CD8-positive, alpha-beta T cell (primary cell): ENCODE measurements at regions of chr17 and their contacts with region 1.

Region 1: DNA sequence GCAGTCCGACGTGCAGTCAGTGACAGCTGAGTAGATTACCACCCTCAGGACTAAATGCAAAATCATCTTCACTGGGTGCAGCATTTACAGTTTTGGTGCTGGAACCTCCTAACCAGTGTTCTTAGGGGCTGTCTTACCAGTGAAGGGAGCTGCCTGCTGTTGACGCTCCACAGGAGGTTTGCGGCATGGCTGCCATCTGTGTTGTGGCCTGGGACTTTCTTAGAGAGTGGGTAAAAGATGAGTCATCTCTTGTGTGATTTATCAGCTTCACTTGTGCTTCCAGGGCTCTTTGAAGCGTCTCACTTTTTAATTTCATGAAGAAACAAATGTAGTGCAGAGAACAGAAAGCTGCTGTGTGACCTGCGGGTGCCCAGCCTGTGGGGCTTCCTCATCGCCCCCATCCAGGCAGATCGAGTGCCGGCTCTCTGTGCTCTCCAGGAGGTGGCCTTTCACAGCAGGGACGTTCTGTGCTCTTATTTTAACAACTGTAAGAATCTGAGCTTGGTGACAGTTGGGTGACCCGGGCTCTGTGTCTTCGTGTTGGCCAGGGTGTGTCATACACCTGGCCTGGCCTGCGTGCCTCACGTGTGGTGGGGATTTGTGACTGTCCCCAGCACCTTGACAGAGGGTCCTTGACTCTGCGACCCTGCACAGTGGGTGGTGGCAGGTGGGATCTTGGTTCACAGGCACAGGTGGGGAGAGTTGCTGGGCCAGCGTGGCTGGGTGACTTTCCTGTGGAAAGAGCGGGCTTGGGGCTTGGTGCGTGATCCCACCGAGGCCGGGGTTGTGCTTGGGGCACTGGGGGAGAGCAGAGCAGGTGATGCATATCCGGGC is 24.3 kb upstream of the ZNF750 start:
- DNase-seq: peak; percentile 75 to 97 (median 88)
- ATAC-seq: peak; percentile 85
- H3K4me3 ChIP-seq: peak overlapping the region; percentile 23 to 46
- H3K4me3 Mint-ChIP-seq: peak overlapping the region; percentile 63
- H3K27ac ChIP-seq: peak overlapping the region; percentile 54 to 84
- H3K27ac Mint-ChIP-seq: peak overlapping the region; percentile 98
- H3K4me1 ChIP-seq: peaks cover 65% of the 10 kb centered on the region
- H3K4me1 Mint-ChIP-seq: peaks cover 65% of the 10 kb centered on the region
- H3K27me3 ChIP-seq: no peaks in the 10 kb centered on the region
- H3K27me3 Mint-ChIP-seq: no peaks in the 10 kb centered on the region
- CTCF ChIP-seq: no peak

Region 2: DNA sequence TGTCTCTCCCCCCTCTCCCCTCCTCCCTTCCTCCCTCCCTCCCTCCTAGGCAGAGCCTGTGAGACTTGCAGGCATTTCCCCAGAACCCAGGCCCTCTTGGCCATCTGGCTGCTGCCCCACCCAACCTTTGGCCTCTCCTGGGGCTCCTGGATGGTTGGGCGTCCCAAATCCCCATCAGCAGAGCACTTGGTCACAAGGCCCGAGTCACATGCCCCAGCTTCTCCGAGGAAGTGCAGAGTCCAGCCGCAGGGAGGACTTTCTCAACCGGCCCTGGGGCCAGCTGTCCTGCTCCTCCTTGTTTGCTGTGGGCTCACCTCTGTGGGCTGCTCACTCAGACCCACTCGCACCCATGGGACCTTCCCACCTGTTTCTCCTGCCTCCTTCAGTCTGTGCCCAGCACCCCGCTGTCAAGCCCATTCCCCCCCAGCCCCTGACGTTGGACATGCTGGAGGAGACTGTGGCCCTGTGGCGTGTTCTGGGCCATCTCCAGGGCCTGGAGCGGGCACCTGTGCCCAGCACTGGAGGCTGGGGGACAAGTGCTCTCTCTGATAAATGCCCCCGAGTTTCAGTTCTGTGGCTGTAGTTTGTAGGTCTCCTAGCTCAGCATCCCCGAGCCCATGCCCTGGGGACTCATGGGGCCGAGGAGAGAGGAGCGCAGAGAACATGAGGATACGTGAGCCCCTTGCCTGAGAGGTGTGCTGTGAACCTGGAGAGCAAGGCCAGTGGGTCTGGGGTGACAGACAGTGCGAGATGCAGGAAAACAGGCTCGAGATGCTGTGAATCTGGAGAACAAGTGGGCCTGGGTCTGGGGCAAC is 17.9 kb after region 1 on chr17:
- CTCF ChIA-PET with region 1: interaction called, 11 read pairs
- POLR2A ChIA-PET with region 1: interaction called, 59 read pairs
- intact Hi-C with region 1: loop called (anchors 1 kb)
- DNase-seq: no peak
- ATAC-seq: no peak
- H3K4me3 ChIP-seq: peak overlapping the region; percentile 14 to 70
- H3K4me3 Mint-ChIP-seq: peak overlapping the region; percentile 82
- H3K27ac ChIP-seq: peak overlapping the region; percentile 74
- H3K27ac Mint-ChIP-seq: peak overlapping the region; percentile 99
- H3K4me1 ChIP-seq: peaks cover 63% of the 10 kb centered on the region
- H3K4me1 Mint-ChIP-seq: peaks cover 71% of the 10 kb centered on the region
- H3K27me3 ChIP-seq: no peaks in the 10 kb centered on the region
- H3K27me3 Mint-ChIP-seq: no peaks in the 10 kb centered on the region
- CTCF ChIP-seq: no peak

Region 3: DNA sequence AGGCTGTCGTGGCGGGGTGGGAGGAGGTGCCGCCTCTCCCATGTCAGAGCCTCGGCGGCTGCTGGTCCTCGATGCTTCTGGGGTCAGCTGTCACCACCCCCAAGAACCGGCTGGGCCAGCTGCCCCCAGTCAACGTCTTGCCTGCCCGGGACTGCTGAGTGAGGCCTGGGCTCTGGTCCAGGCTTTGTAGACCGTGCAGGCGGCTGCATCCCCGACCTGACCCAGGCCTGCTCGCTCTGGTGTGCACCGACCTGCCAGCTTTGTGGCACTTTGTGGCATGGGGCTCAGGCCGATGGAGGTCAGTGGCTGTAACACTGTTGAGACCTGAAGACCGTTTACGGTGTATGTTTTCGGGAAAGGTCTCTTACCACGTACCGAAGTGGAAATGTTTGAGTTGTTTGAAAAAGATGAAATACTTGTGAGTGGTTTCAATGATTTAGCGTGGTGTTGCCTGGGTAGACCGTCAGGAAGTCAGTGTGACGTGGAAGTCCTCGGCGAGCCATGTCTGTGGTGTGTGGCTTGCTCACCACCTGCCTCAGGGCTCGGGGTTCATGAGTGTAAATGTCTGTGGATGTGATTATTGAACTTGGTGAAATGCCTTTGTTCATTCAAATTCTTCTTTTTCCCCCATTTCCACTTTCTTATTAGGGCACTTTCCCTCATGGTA is 28.9 kb after region 1 on chr17:
- CTCF ChIA-PET with region 1: interaction called, 7 read pairs
- POLR2A ChIA-PET with region 1: interaction called, 8 read pairs
- intact Hi-C with region 1: loop called (anchors 1 kb)
- DNase-seq: peak; percentile 65 to 94 (median 83)
- ATAC-seq: peak; percentile 94
- H3K4me3 ChIP-seq: no peak overlapping the region
- H3K4me3 Mint-ChIP-seq: peak overlapping the region; percentile 71
- H3K27ac ChIP-seq: peak overlapping the region; percentile 42 to 58
- H3K27ac Mint-ChIP-seq: peak overlapping the region; percentile 96
- H3K4me1 ChIP-seq: peaks cover 22% of the 10 kb centered on the region
- H3K4me1 Mint-ChIP-seq: peaks cover 33% of the 10 kb centered on the region
- H3K27me3 ChIP-seq: no peaks in the 10 kb centered on the region
- H3K27me3 Mint-ChIP-seq: no peaks in the 10 kb centered on the region
- CTCF ChIP-seq: no peak

Region 4: DNA sequence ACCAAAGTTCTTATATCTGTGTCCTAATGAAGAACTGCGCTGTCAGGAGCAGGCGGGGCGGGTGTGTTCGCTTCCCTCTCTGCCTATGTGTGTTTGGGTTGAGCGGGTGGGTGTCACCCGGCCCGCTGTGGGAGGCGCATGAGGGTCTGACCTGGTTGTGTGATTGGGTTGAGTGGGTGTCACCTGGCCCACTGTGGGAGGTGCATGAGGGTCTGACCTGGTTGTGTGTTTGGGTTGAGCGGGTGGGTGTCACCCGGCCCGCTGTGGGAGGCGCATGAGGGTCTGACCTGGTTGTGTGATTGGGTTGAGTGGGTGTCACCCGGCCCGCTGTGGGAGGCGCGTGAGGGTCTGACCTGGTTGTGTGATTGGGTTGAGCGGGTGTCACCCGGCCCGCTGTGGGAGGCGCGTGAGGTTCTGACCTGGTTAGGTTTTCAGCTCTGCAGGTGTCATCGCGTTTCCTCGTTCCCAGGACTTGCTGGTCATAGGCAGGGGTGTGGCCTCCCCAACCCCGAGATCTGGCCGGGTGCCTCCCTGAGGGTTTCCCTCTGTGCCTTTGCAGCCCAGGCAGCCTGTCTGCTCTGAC is 45.3 kb after region 1 on chr17:
- CTCF ChIA-PET with region 1: interaction called, 3 read pairs
- POLR2A ChIA-PET with region 1: interaction called, 23 read pairs
- intact Hi-C with region 1: loop called (anchors 5 kb)
- DNase-seq: peak; percentile 32 to 92 (median 69)
- ATAC-seq: peak; percentile 77
- H3K4me3 ChIP-seq: no peak overlapping the region
- H3K4me3 Mint-ChIP-seq: peak overlapping the region; percentile 42
- H3K27ac ChIP-seq: peak overlapping the region in 1 of 2 experiments; percentile 16
- H3K27ac Mint-ChIP-seq: peak overlapping the region; percentile 96
- H3K4me1 ChIP-seq: peaks cover 26% of the 10 kb centered on the region
- H3K4me1 Mint-ChIP-seq: peaks cover 27% of the 10 kb centered on the region
- H3K27me3 ChIP-seq: no peaks in the 10 kb centered on the region
- H3K27me3 Mint-ChIP-seq: no peaks in the 10 kb centered on the region
- CTCF ChIP-seq: no peak

Region 5: GRCh38 chr17:82917691-82918345 is 53.7 kb after region 1 on chr17:
- CTCF ChIA-PET with region 1: interaction called, 3 read pairs
- POLR2A ChIA-PET with region 1: no interaction called
- intact Hi-C with region 1: loop called in 1 of 2 experiments (anchors 5 kb)
- DNase-seq: peak in 8 of 9 experiments; percentile 16 to 67 (median 50)
- ATAC-seq: peak; percentile 65
- H3K4me3 ChIP-seq: no peak overlapping the region
- H3K4me3 Mint-ChIP-seq: no peak overlapping the region
- H3K27ac ChIP-seq: no peak overlapping the region
- H3K27ac Mint-ChIP-seq: no peak overlapping the region
- H3K4me1 ChIP-seq: peaks cover 4% of the 10 kb centered on the region
- H3K4me1 Mint-ChIP-seq: peaks cover 15% of the 10 kb centered on the region
- H3K27me3 ChIP-seq: no peaks in the 10 kb centered on the region
- H3K27me3 Mint-ChIP-seq: no peaks in the 10 kb centered on the region
- CTCF ChIP-seq: peak; percentile 21

Region 6: GRCh38 chr17:82962864-82963684 is 98.9 kb after region 1 on chr17:
- CTCF ChIA-PET with region 1: no interaction called
- POLR2A ChIA-PET with region 1: no interaction called
- intact Hi-C with region 1: no loop called
- DNase-seq: peak in 8 of 9 experiments; percentile 14 to 74 (median 38)
- ATAC-seq: peak; percentile 66
- H3K4me3 ChIP-seq: no peak overlapping the region
- H3K4me3 Mint-ChIP-seq: no peak overlapping the region
- H3K27ac ChIP-seq: no peak overlapping the region
- H3K27ac Mint-ChIP-seq: no peak overlapping the region
- H3K4me1 ChIP-seq: peaks cover 6% of the 10 kb centered on the region
- H3K4me1 Mint-ChIP-seq: peaks cover 6% of the 10 kb centered on the region
- H3K27me3 ChIP-seq: no peaks in the 10 kb centered on the region
- H3K27me3 Mint-ChIP-seq: no peaks in the 10 kb centered on the region
- CTCF ChIP-seq: peak; percentile 33